ENCODE measurements at regions of chr19 and their contacts with region 1.

Region 1: DNA sequence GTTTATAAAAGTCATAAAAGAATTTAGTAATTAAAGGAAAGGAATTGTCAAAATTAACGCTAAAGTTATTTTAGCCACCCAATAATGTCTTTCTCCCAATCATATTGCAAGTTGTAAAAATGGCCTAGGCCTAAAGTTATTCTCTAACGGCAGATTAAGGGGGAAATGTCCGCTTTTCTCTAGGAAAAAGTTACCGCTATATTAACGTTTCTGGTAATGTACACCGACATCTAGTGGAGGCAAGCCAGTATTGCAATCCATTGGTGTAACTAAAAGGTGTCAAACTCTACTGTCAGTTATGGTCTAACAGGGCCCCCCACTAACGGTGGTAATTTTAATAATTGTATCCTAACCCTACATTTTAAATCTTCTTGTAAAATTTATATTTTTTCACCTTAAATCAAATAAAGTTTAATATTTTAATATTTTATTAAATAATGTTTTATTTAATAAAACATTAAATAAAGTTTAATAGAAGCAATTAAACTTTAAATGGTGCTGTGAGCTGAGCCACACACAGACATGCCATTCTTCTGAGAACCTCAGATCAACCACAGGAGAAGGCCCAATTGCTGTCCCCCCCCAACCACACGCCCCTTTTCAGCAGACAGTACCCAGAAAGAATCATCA is 35.9 kb upstream of the ZSCAN5A start:
- DNase-seq: peak; percentile 11
- H3K4me3 ChIP-seq: no peak overlapping the region
- H3K27ac ChIP-seq: no peak overlapping the region
- H3K4me1 ChIP-seq: no peaks in the 10 kb centered on the region
- H3K27me3 ChIP-seq: no peaks in the 10 kb centered on the region
- CTCF ChIP-seq: peak; percentile 45 to 75 (median 70)
- POLR2A ChIP-seq: no peak

Region 2: GRCh38 chr19:56252699-56253422 is 97.7 kb before region 1 on chr19:
- intact Hi-C with region 1: loop called (anchors 5 kb)
- DNase-seq: peak; percentile 31
- H3K4me3 ChIP-seq: no peak overlapping the region
- H3K27ac ChIP-seq: no peak overlapping the region
- H3K4me1 ChIP-seq: no peaks in the 10 kb centered on the region
- H3K27me3 ChIP-seq: no peaks in the 10 kb centered on the region
- CTCF ChIP-seq: peak; percentile 49 to 79 (median 64)
- POLR2A ChIP-seq: no peak

Region 3: DNA sequence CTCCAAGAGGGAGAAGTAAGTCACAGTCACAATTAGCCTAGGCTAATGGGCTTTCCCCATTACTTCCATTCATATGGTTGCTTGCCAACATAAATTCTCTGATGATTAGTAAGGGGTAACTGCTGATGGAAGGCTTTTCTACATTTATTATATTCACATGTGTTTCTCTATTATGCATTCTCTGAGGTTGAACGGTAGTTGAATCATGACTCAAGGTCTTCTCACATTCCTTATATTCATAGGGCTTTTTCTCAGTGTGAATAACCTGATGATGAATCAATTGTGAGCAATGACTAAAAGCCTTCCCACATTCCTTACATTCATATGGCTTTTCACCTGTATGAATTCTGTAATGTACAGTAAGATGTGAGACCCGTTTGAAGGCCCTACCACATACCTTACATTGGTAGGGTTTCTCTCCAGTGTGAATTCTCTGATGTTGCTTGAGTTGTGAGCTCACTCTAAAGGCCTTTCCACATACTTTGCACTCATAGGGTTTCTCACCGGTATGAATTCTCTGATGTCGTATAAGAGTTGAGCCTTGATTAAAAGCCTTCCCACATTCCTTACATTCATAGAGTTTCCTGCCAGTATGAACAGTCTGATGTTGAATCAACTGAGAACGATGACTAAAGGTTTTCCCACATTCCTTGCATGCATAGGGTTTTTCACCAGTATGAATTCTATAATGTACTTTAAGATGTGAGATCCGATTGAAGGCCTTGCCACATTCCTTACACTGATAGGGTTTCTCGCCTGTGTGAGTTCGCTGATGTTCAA is 33.5 kb after region 1 on chr19:
- intact Hi-C with region 1: no loop called
- DNase-seq: no peak
- H3K4me3 ChIP-seq: no peak overlapping the region
- H3K27ac ChIP-seq: no peak overlapping the region
- H3K4me1 ChIP-seq: no peaks in the 10 kb centered on the region
- H3K27me3 ChIP-seq: no peaks in the 10 kb centered on the region
- CTCF ChIP-seq: no peak
- POLR2A ChIP-seq: no peak

Region 4: GRCh38 chr19:56403764-56404704 is 53.5 kb after region 1 on chr19 and contains the start of gene ZNF583:
- intact Hi-C with region 1: no loop called
- DNase-seq: peak; percentile 93
- H3K4me3 ChIP-seq: peak within 1 kb of the TSS; percentile 63 to 94
- H3K27ac ChIP-seq: peak within 1 kb of the TSS; percentile 94 to 99
- H3K4me1 ChIP-seq: no peaks in the 10 kb centered on the region
- H3K27me3 ChIP-seq: no peaks in the 10 kb centered on the region
- CTCF ChIP-seq: peak in 1 of 4 experiments; percentile 14
- POLR2A ChIP-seq: no peak
- total RNA-seq, gene ZNF583: 3.6 to 5.2 TPM

Measured in prostate gland (tissue), 2 donors.